Activated CD4-positive, alpha-beta memory T cell treated with anti-CD3 and anti-CD28 coated beads for 36 hours (primary cell): ENCODE measurements at regions of chr2 and their contacts with region 1.

Region 1: DNA sequence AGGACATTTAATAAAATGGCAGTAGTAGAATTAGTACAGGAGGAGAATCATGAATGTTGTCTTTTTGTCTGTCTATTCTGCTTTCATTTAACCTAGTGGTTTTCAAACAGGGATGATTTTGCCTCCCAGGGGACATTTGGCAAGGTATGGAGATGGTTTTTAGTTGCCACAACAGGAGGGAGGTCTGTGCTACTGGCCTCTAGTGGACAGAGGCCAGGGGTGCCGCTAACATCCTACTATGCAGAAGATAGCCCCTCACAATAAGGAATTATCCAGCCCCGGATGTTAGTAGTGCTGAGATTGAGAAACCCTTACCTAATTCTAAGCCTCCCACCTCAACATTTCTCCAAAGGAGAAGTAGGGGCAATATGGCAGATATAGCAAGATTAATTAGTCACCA is 18.3 kb downstream of the FASTKD2 start:
- DNase-seq: no peak
- H3K4me3 Mint-ChIP-seq: no peak overlapping the region
- H3K27ac Mint-ChIP-seq: no peak overlapping the region
- H3K4me1 Mint-ChIP-seq: peaks cover 13% of the 10 kb centered on the region
- H3K27me3 Mint-ChIP-seq: no peaks in the 10 kb centered on the region

Region 2: GRCh38 chr2:206392118-206392517 is 391.6 kb before region 1 on chr2:
- CTCF ChIA-PET with region 1: no interaction called
- POLR2A ChIA-PET with region 1: no interaction called
- intact Hi-C with region 1: loop called (anchors 2 kb)
- DNase-seq: peak; percentile 45
- H3K4me3 Mint-ChIP-seq: no peak overlapping the region
- H3K27ac Mint-ChIP-seq: no peak overlapping the region
- H3K4me1 Mint-ChIP-seq: no peaks in the 10 kb centered on the region
- H3K27me3 Mint-ChIP-seq: no peaks in the 10 kb centered on the region

Region 3: DNA sequence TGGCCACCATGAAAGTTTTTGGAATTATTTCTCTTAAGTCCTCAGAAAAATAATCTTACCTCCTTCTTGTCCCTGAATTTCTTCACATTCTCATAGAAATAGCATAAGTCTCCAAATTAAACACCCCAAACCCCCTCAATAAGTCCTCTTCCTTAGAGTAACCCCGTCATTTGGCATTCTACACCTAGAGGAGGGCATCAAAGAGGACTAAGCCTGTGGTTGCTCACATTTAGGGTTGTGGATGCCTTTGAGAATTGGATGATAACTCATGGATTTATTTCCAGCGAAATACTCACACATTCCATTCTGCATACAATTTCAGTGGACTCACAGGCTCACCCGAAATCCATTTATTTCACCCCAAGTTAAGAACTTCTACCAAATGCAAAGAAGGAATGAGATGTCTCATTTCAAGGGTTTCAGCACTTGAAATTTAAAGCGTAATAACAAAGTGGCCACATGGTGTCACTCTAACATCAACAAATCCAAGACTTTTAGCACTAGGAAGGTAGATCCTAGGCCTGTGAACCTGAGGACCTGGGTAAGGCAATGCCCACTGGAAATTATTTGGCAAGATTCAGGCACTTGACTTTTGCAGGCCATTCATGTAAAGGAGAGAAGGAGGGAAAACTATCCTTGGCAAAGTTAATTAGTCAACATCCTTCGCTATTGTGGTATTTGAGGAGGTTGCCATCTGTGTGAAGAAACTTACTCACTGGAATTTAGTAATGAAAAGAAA is 90.2 kb before region 1 on chr2:
- CTCF ChIA-PET with region 1: interaction called, 33 read pairs
- POLR2A ChIA-PET with region 1: no interaction called
- intact Hi-C with region 1: loop called (anchors 1 kb)
- DNase-seq: no peak
- H3K4me3 Mint-ChIP-seq: no peak overlapping the region
- H3K27ac Mint-ChIP-seq: no peak overlapping the region
- H3K4me1 Mint-ChIP-seq: peaks cover 3% of the 10 kb centered on the region
- H3K27me3 Mint-ChIP-seq: no peaks in the 10 kb centered on the region

Region 4: DNA sequence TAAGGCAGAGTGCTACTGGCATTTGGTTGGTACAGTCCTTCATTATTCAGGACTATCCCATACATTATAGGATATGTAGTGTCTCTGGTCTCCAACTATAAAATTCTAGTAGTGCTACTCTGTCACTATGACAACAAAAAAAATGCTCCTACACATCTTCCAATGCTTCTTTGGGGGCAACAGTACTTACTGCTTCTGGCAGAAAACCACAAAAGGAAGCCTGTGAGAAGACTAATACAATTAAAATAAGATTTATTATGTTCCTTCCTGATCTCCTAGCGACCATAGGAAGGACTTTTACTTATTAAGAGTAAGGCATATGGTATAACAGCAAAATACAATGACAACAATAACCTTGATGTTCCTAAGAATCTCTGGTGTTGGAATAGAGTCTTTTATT is 107.2 kb after region 1 on chr2:
- CTCF ChIA-PET with region 1: no interaction called
- POLR2A ChIA-PET with region 1: no interaction called
- intact Hi-C with region 1: no loop called
- DNase-seq: no peak
- H3K4me3 Mint-ChIP-seq: no peak overlapping the region
- H3K27ac Mint-ChIP-seq: no peak overlapping the region
- H3K4me1 Mint-ChIP-seq: no peaks in the 10 kb centered on the region
- H3K27me3 Mint-ChIP-seq: no peaks in the 10 kb centered on the region